ENCODE measurements at regions of chr3 and their contacts with region 1.

Region 1: DNA sequence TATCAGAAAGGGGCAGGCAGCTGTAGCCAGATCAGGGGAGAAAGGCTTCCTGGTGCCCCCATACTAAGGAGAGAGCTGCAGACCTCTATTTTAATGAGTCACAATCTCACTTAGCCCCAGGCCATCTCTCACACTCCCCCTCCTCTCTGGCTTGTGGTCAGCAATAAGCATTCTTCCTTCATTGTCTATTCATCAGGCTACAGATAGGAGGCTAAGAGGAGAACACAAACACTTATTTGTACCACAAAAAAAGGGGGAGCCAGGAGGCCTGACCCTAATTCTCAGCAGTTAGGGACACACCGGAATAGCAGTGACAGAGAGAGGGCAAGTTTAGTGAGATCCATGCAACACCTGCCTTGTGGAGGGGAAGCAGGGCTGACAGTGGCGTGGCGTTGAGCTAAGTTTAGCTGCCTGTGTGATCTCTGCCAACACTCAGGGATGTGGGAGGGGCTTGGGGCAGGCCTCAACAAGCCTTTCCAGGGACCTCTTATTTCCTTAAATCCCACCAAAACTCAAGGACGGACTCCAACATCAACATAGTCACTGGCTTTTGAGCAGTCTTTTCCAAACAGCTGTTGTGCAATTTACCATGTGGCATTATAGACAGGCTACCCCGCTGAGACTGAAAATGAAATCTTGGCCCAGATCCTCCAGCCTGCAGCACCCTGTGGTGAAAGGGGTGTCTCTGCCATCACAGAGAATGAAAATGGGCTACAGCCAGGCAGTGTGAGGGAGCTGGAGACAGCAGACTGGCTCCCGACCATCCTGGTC is 191.9 kb upstream of the TSC22D2 start:
- DNase-seq: peak; percentile 96
- H3K4me3 Mint-ChIP-seq: peak overlapping the region; percentile 22
- H3K27ac Mint-ChIP-seq: no peak overlapping the region
- H3K4me1 Mint-ChIP-seq: peaks cover 14% of the 10 kb centered on the region
- H3K27me3 Mint-ChIP-seq: peaks cover 2% of the 10 kb centered on the region
- CTCF ChIP-seq: no peak

Region 2: DNA sequence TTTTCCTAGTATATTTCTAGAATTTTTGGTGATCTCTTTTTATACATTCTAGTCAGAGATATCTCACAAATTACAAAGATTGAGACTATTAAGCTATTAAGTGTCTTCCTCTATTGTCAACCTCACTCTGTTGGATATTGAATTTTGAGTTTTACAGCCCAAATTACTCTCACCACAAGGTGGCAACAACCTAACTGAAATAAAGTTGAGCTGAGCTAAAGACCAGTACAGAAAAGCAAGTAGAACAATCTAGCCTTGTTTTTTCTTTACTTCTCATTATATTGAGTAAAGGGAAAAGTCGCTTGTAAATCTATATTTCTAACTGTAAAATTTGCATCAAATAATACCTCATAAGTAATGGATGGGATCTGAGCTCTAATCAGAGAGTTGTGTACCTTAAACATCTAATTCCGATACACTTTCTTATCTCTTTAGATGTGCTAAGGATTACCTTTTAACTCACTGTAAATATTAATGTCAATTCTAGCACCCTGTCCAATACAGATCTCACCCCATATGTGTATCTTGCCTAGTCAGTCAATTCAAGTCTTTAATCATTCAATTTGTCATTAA is 450.4 kb before region 1 on chr3:
- CTCF ChIA-PET with region 1: interaction called, 3 read pairs
- POLR2A ChIA-PET with region 1: no interaction called
- intact Hi-C with region 1: loop called (anchors 5 kb)
- DNase-seq: peak; percentile 34
- H3K4me3 Mint-ChIP-seq: no peak overlapping the region
- H3K27ac Mint-ChIP-seq: no peak overlapping the region
- H3K4me1 Mint-ChIP-seq: no peaks in the 10 kb centered on the region
- H3K27me3 Mint-ChIP-seq: no peaks in the 10 kb centered on the region
- CTCF ChIP-seq: peak; percentile 49

Region 3: DNA sequence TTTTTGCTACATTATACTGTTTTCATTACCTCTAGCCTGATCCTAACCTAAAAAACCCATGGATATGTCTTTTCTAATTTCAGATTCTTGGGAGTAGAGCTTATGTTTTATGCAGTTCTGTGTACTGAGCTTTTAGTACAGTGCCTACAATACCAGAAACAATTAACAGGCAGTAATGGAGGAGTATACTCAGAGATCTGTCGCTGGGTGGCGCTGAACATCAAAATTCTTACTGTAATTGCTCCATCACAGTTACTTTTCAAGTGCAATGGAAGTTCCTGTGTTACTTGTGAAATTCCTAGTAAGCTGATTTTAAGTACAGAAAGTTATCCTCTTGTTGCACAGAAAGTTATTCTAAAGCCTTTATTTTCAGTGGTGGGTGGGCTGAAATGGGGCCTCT is 336.4 kb before region 1 on chr3:
- CTCF ChIA-PET with region 1: no interaction called
- POLR2A ChIA-PET with region 1: no interaction called
- intact Hi-C with region 1: loop called (anchors 5 kb)
- DNase-seq: peak; percentile 67
- H3K4me3 Mint-ChIP-seq: no peak overlapping the region
- H3K27ac Mint-ChIP-seq: no peak overlapping the region
- H3K4me1 Mint-ChIP-seq: no peaks in the 10 kb centered on the region
- H3K27me3 Mint-ChIP-seq: no peaks in the 10 kb centered on the region
- CTCF ChIP-seq: peak; percentile 48

Region 4: GRCh38 chr3:149969940-149970715 is 246.1 kb before region 1 on chr3:
- CTCF ChIA-PET with region 1: interaction called, 74 read pairs
- POLR2A ChIA-PET with region 1: interaction called, 9 read pairs
- intact Hi-C with region 1: loop called (anchors 1 kb)
- DNase-seq: peak; percentile 80
- H3K4me3 Mint-ChIP-seq: peak overlapping the region; percentile 80
- H3K27ac Mint-ChIP-seq: peak overlapping the region; percentile 84
- H3K4me1 Mint-ChIP-seq: peaks cover 28% of the 10 kb centered on the region
- H3K27me3 Mint-ChIP-seq: no peaks in the 10 kb centered on the region
- CTCF ChIP-seq: no peak

Region 5: DNA sequence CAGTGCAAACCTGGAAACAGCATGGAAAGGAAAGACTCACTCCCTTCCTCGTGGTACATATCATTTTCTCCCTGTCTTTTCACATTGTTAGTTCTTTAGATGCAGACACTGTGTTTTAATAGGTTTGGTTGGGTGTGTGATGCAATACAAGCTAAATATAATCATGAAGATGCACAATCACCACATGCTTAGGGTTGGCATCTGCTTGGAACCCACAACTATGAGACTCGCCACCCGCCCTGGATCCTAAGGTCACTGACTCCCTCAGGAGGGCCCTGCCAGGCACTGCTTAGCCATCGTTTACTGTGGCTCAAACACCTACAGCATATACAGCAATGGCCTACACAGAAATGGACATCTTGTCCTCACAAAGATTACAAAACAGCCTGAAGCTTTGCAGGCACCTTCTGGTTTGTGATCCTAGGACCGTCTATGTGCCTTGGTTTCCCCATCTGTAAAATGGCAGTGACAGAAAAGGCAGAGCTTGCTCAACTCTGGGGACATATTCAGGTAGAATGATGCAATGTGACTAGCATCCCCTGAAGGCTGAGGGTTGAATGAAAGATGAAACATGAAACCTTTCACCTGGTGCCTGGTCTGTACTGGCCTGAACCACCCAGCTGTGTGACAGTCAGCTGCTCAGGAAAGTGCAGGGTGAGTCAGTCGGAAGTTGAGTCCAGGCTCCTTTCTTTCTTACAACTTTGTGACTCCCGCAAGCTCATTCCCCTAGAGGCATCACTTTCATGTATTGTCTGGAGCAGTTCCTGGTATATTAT is 121.9 kb before region 1 on chr3:
- CTCF ChIA-PET with region 1: no interaction called
- POLR2A ChIA-PET with region 1: no interaction called
- intact Hi-C with region 1: no loop called
- DNase-seq: peak; percentile 86
- H3K4me3 Mint-ChIP-seq: no peak overlapping the region
- H3K27ac Mint-ChIP-seq: peak overlapping the region; percentile 12
- H3K4me1 Mint-ChIP-seq: peaks cover 22% of the 10 kb centered on the region
- H3K27me3 Mint-ChIP-seq: no peaks in the 10 kb centered on the region
- CTCF ChIP-seq: no peak

Region 6: DNA sequence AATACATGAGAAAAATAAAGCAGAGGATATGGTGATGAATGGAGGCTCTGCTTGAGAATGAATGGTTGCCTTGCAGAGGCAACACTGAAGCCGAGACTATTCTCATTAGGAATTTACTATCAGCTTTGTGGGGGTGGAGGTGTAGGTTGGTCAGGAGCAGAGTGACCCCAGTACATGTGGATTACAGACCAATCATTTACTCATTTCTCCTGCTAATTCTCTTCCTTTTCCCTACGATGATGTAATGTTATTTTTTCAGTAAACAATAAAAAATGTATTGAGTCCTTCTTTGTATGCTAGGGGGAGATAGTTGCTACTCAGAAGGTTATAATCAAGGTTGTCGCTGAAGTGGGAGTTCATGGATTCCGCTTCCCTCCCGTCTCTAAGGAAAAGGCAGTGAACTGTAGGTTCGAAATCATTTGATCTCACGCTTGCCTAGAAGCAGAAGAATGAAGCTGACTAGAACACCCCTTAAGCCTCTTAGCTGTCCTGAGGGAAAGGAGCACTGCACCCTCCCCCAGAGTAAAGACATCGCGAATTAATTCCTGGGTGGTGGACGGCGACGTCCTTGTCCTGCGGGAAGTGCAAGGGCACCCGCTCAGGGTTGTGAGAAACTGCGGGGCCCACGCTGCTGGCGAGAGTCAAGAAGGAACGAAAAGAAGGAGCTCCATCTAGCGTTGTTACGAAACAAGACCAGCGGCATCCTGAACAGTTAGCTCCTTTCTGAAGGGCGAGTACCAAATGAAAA is 32.4 kb before region 1 on chr3:
- CTCF ChIA-PET with region 1: interaction called, 16 read pairs
- POLR2A ChIA-PET with region 1: interaction called, 4 read pairs
- intact Hi-C with region 1: no loop called
- DNase-seq: peak; percentile 84
- H3K4me3 Mint-ChIP-seq: no peak overlapping the region
- H3K27ac Mint-ChIP-seq: no peak overlapping the region
- H3K4me1 Mint-ChIP-seq: peaks cover 7% of the 10 kb centered on the region
- H3K27me3 Mint-ChIP-seq: no peaks in the 10 kb centered on the region
- CTCF ChIP-seq: peak; percentile 70

Region 7: DNA sequence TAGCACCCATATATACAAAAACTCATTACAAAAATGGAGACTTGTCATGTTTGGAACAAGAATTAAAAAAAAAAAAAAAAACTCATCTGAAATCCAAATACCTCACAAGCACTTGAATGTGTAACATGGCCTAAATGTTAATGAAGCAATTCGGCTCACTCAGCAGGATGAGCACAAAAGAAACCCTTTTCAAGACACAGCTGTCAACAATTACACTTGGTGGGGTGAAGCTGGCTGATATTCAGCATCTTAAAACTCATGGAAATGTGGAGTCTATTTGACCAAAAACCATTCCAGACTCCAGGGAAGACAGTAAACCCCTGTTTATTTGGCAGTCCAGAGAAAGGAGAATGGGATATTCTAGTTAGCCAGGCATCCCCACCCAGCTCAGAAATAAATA is 13.5 kb before region 1 on chr3:
- CTCF ChIA-PET with region 1: interaction called, 11 read pairs
- POLR2A ChIA-PET with region 1: no interaction called
- intact Hi-C with region 1: no loop called
- DNase-seq: no peak
- H3K4me3 Mint-ChIP-seq: no peak overlapping the region
- H3K27ac Mint-ChIP-seq: no peak overlapping the region
- H3K4me1 Mint-ChIP-seq: no peaks in the 10 kb centered on the region
- H3K27me3 Mint-ChIP-seq: peaks cover 9% of the 10 kb centered on the region
- CTCF ChIP-seq: no peak

Region 8: DNA sequence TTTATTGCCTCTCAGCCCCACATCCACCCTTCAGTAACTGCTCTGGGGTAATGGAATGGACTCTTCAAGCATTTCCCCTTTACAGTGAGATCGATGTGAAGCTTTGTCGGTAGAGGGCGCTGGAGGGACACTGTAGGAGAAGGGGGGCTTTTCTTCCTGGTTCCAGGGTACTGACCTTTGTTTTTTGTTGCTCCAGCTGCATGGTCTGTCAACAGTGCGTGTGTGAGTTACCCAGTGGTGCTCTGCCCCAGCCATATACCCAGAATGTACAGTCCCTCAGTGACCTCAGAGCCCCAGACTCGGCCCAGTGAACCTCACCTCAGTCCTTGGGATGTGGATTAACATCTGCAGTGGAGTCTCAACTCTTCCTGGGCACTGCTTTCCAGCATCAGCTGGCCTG is 11.6 kb after region 1 on chr3:
- CTCF ChIA-PET with region 1: interaction called, 15 read pairs
- POLR2A ChIA-PET with region 1: no interaction called
- intact Hi-C with region 1: no loop called
- DNase-seq: peak; percentile 74
- H3K4me3 Mint-ChIP-seq: no peak overlapping the region
- H3K27ac Mint-ChIP-seq: no peak overlapping the region
- H3K4me1 Mint-ChIP-seq: peaks cover under 1% of the 10 kb centered on the region
- H3K27me3 Mint-ChIP-seq: no peaks in the 10 kb centered on the region
- CTCF ChIP-seq: peak; percentile 67

Region 9: GRCh38 chr3:150449169-150449721 is 233.0 kb after region 1 on chr3:
- CTCF ChIA-PET with region 1: no interaction called
- POLR2A ChIA-PET with region 1: no interaction called
- intact Hi-C with region 1: no loop called
- DNase-seq: peak; percentile 56
- H3K4me3 Mint-ChIP-seq: peak overlapping the region; percentile 43
- H3K27ac Mint-ChIP-seq: peak overlapping the region; percentile 44
- H3K4me1 Mint-ChIP-seq: peaks cover 34% of the 10 kb centered on the region
- H3K27me3 Mint-ChIP-seq: no peaks in the 10 kb centered on the region
- CTCF ChIP-seq: no peak

Measured in MCF 10A (cell line).